ENCODE measurements at regions of chr1 and their contacts with region 1.

Region 1: DNA sequence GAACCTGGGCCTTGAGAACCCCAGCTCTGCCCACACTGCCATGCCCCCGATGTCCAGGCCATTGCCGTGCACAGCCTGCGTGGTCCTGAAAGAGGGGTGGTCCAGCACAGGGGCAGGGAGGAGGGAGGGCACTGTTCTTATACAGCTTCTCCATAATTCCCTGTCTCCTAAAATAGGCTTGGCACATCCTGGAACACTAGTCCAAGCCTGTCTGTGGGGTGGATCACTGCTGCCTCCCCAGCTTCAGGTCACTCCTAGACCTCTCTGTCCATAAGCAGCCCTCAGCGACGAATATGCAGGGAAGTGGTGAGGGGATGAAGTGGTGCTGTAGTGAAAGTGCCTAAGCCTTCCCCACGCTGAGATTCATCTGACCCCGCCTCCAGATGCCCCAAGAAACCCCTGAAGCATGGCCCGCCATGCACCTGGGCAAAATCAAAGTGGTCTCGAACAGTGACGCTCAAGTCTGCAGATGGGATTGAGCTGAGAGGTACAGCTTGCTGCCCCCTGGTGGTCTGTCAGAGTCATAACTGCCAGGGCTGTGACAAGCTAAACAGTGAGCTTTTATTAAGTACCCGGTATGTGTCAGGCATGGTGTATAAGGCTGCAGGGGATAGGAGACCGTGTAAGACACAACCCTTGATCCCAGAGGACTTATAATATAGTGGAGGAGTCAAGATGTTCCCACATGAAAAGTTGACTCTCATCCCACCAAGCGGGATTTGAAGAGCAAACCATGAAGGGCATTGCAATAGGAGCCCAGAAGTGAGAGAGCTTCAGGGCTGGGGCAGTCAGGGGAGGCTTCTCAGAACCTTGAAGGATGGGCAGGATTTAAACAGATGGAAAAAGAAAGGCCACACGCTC is 66.6 kb downstream of the FAM163A start:
- DNase-seq: peak; percentile 80
- H3K4me3 Mint-ChIP-seq: no peak overlapping the region
- H3K27ac Mint-ChIP-seq: no peak overlapping the region
- H3K4me1 Mint-ChIP-seq: peaks cover 7% of the 10 kb centered on the region
- H3K27me3 Mint-ChIP-seq: peaks cover 41% of the 10 kb centered on the region

Region 2: GRCh38 chr1:179529482-179530195 is 280.1 kb before region 1 on chr1:
- CTCF ChIA-PET with region 1: no interaction called
- DNase-seq: no peak
- H3K4me3 Mint-ChIP-seq: no peak overlapping the region
- H3K27ac Mint-ChIP-seq: no peak overlapping the region
- H3K4me1 Mint-ChIP-seq: no peaks in the 10 kb centered on the region
- H3K27me3 Mint-ChIP-seq: no peaks in the 10 kb centered on the region

Region 3: DNA sequence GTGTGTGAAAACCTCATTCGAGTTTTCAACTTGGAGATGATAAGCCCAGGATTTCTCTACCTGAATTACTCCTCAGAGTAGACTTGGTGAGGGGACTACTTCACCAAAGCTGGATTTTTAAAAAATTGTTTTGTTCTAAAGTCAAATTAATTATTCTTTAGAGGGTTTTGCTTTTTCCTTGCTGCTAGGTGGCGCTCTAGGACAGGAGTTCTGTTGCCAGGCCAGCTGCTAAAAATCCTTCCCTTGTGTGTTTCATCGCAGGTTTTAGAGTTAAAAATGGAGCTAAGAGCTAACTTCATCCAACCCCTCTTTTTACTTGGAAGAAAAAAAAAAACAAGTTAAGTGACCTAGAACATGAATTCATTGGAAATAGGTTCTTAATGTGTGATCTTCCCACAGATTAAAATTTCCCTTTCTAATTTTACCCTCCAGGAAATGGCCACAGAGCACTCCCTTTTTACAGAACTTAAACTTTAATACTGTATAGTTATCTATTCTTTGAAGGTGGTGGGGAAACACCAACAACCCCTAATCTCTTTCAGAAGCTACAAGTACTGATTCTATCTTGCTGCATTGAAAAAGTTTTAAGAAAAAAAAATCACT is 103.3 kb before region 1 on chr1:
- CTCF ChIA-PET with region 1: interaction called, 565 read pairs
- DNase-seq: peak; percentile 75
- H3K4me3 Mint-ChIP-seq: no peak overlapping the region
- H3K27ac Mint-ChIP-seq: no peak overlapping the region
- H3K4me1 Mint-ChIP-seq: peaks cover 18% of the 10 kb centered on the region
- H3K27me3 Mint-ChIP-seq: peaks cover 3% of the 10 kb centered on the region

Region 4: GRCh38 chr1:179779645-179780272 is 30.0 kb before region 1 on chr1:
- CTCF ChIA-PET with region 1: interaction called, 14 read pairs
- DNase-seq: no peak
- H3K4me3 Mint-ChIP-seq: no peak overlapping the region
- H3K27ac Mint-ChIP-seq: no peak overlapping the region
- H3K4me1 Mint-ChIP-seq: no peaks in the 10 kb centered on the region
- H3K27me3 Mint-ChIP-seq: peaks cover 3% of the 10 kb centered on the region

Region 5: GRCh38 chr1:179824265-179824664 is 14.5 kb after region 1 on chr1:
- CTCF ChIA-PET with region 1: interaction called, 27 read pairs
- DNase-seq: no peak
- H3K4me3 Mint-ChIP-seq: no peak overlapping the region
- H3K27ac Mint-ChIP-seq: peak overlapping the region; percentile 14
- H3K4me1 Mint-ChIP-seq: no peaks in the 10 kb centered on the region
- H3K27me3 Mint-ChIP-seq: peaks cover 32% of the 10 kb centered on the region

Region 6: DNA sequence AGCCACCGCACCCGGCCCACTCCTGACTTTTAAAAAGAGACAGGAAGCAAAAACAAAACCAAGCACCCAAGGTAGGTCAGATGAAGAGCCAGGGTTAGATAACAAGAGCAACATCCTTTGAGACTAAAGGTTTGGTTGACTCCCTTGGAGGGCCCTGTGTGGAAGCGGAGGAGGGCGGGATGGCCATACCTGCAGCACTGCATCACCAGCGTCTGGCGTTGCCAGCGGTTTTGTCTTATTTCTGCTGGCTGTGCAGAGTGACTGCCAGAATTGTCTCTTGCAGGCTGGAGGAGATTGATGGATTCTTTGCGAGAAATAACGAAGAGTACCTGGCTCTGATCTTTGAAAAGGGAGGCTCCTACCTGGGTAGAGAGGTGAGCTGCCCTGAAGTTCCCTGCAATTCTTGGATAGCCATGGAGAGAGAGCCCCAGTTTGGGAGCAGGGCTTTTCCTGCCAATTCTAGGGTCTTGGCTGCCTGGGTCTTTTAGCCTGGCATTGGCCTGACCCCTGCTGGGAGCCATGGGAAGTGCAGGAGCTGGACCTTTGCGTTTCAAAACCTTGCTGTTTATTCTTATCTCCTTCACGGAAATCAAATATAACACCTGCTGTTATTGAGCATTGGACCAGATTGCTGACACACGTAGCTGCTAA is 368.9 kb after region 1 on chr1:
- CTCF ChIA-PET with region 1: interaction called, 38 read pairs
- DNase-seq: peak; percentile 76
- H3K4me3 Mint-ChIP-seq: no peak overlapping the region
- H3K27ac Mint-ChIP-seq: no peak overlapping the region
- H3K4me1 Mint-ChIP-seq: no peaks in the 10 kb centered on the region
- H3K27me3 Mint-ChIP-seq: no peaks in the 10 kb centered on the region

Measured in activated naive CD4-positive, alpha-beta T cell treated with anti-CD3 and anti-CD28 coated beads, Interleukin-2, amount 10 ng/mL, durations not matched to agents 7 days and 5 days (primary cell).